ENCODE measurements at regions of chr13 and their contacts with region 1.

Region 1: DNA sequence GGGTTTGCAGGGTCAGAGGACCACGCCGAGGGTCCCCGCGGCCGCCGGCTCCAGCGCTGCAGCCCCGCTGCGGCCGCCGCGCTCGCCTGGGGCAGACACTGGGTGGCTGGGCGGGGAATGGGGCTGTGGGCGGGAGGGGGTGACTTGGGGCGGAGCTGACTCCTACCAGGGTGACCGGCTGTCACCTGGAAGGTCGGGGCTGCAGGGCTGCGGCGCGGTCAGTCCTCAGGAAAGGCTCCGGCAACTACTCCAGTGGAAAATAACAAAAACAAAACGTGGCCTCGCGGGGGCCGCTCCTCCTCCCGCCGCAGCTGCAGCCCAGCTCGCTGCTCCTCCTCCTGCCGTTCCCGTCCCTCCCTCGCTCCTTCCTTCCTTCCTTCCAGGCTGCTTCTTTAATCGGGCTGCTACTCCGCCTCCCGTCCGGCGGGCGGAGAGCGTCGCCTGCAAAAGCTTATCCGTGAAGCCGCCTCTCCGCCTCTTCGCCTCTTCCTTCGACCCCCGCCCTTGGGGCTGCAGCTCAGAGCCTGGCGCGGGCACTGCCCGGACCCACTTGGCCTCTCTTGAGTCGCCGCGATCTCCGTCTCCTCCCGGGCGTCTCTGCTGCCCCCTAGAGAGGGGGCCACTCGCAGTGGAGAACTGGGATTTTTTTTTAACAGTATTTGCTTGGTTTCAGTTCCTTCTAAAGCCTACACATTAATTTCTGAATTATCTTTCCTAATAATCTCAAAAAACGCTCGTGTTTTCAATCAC is at the start of gene TBC1D4:
- DNase-seq: peak; percentile 91 to 96 (median 95)
- H3K4me3 ChIP-seq: peak within 1 kb of the TSS; percentile 56 to 88 (median 85)
- H3K27ac ChIP-seq: peak within 1 kb of the TSS; percentile 76 to 91 (median 80)
- H3K4me1 ChIP-seq: peaks cover 0 to 10% of the 10 kb centered on the region in 2 donors
- H3K27me3 ChIP-seq: no peaks in the 10 kb centered on the region
- CTCF ChIP-seq: peak; percentile 64 to 88 (median 78)
- POLR2A ChIP-seq: peak in 1 of 2 donors; percentile 80
- total RNA-seq, gene TBC1D4: 59.2 to 324 (median 236) TPM

Region 2: GRCh38 chr13:75365724-75366173 is 116.5 kb before region 1 on chr13:
- intact Hi-C with region 1: loop called (anchors 10 kb)
- DNase-seq: no peak
- H3K4me3 ChIP-seq: no peak overlapping the region
- H3K27ac ChIP-seq: peak overlapping the region in 2 of 5 donors; percentile 38 to 74
- H3K4me1 ChIP-seq: peaks cover 31 to 62% of the 10 kb centered on the region in 2 donors
- H3K27me3 ChIP-seq: no peaks in the 10 kb centered on the region
- CTCF ChIP-seq: peak in 2 of 6 experiments; percentile 8 to 16
- POLR2A ChIP-seq: no peak

Region 3: DNA sequence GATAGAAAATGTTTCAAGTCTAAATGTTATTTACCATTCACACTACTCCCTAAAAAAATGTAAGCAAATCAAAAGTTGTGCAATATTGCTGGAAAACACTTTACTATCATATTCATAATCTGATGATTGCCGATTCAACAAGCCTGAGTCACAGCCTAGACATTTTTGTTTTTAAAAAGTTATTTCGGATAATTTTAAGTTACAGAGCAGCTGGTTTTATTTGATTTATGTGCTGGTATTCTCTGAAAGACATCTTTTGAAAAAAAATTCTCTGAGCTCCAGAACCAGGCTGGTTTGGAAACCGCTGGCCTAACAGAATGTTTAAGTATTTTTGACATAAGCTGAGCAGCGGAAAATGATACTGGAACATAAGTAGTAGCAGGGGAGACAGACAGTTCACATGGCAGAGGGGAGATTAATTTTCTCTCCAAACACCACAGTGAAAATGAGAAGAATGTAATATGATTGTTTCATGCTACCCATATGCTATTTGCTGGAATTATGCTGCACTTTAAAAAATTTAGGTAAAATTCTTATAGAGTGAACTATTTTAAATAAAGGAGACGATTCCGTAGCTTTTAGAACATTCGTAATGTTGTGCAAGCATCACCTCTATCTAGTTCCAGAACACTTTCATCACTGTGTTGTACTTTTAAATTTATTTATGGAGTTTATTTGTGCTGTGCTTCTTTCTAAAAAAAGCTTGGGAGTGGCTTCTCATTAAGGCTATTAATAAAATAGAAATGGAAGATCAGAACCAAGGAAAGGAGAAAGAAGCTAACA is 36.3 kb before region 1 on chr13:
- intact Hi-C with region 1: no loop called
- DNase-seq: no peak
- H3K4me3 ChIP-seq: peak overlapping the region in 1 of 4 donors; percentile 37
- H3K27ac ChIP-seq: peak overlapping the region; percentile 54 to 74 (median 70)
- H3K4me1 ChIP-seq: peaks cover 8 to 45% of the 10 kb centered on the region in 2 donors
- H3K27me3 ChIP-seq: no peaks in the 10 kb centered on the region
- CTCF ChIP-seq: no peak
- POLR2A ChIP-seq: no peak

Region 4: GRCh38 chr13:75549262-75550158 is 67.3 kb after region 1 on chr13 and contains the start of gene UCHL3:
- intact Hi-C with region 1: loop called in 1 of 2 experiments (anchors 10 kb)
- DNase-seq: peak; percentile 96 to 99 (median 98)
- H3K4me3 ChIP-seq: peak within 1 kb of the TSS; percentile 3 to 88 (median 70)
- H3K27ac ChIP-seq: peak within 1 kb of the TSS; percentile 57 to 95 (median 73)
- H3K4me1 ChIP-seq: peaks cover 0 to 77% of the 10 kb centered on the region in 2 donors
- H3K27me3 ChIP-seq: no peaks in the 10 kb centered on the region
- CTCF ChIP-seq: peak; percentile 77 to 96 (median 95)
- POLR2A ChIP-seq: peak; percentile 60 to 79
- total RNA-seq, gene UCHL3: 35.0 to 109 (median 68.7) TPM